ENCODE measurements at regions of chr19 and their contacts with region 1.

Region 1: GRCh38 chr19:49546825-49547565 is 19.2 kb downstream of the RCN3 start:
- DNase-seq: peak; percentile 89
- ATAC-seq: peak; percentile 90
- H3K4me3 ChIP-seq: no peak overlapping the region
- H3K27ac ChIP-seq: no peak overlapping the region
- H3K4me1 ChIP-seq: no peaks in the 10 kb centered on the region; the same call in 1 of the 2 replicates
- H3K27me3 ChIP-seq: no peaks in the 10 kb centered on the region
- CTCF ChIP-seq: peak; percentile 96
- POLR2A ChIP-seq: no peak
- RAD21 ChIP-seq: peak; percentile 83

Region 2: DNA sequence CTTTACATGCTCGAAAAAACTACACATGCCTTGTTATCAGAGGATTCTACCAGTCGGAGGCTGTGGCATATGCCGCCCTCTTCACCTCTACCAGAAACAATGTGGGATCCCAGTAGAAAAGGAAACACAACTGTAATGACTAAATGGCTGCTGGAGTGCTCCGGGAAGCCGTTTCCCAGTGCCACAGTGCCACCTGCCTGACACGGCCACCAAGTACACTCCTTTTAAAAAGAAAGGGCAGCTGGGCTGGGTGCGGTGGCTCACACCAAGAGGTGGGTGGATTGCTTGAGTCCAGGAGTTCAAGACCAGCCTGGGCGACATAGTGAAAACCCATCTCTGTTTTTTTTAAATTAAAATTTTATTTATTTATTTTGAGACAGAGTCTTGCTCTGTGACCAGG is 322.1 kb before region 1 on chr19:
- CTCF ChIA-PET with region 1: no interaction called
- POLR2A ChIA-PET with region 1: no interaction called
- dilution Hi-C with region 1: no loop called
- in situ Hi-C with region 1: no loop called
- intact Hi-C with region 1: loop called (anchors 5 kb)
- DNase-seq: peak; percentile 57
- ATAC-seq: peak; percentile 79
- H3K4me3 ChIP-seq: no peak overlapping the region
- H3K27ac ChIP-seq: no peak overlapping the region
- H3K4me1 ChIP-seq: no peaks in the 10 kb centered on the region
- H3K27me3 ChIP-seq: peaks cover 3% of the 10 kb centered on the region; the same call in 1 of the 2 replicates
- CTCF ChIP-seq: peak; percentile 60
- POLR2A ChIP-seq: no peak
- RAD21 ChIP-seq: peak; percentile 67

Region 3: GRCh38 chr19:49473868-49474544 is 73.0 kb before region 1 on chr19 and contains the start of gene FLT3LG:
- CTCF ChIA-PET with region 1: interaction called, 5 read pairs
- POLR2A ChIA-PET with region 1: no interaction called
- dilution Hi-C with region 1: no loop called
- in situ Hi-C with region 1: no loop called
- intact Hi-C with region 1: loop called (anchors 1 kb)
- DNase-seq: peak; percentile 69
- ATAC-seq: peak; percentile 85
- H3K4me3 ChIP-seq: peak within 1 kb of the TSS; percentile 59
- H3K27ac ChIP-seq: peak within 1 kb of the TSS; percentile 49
- H3K4me1 ChIP-seq: peaks cover 11% of the 10 kb centered on the region; the same call in 1 of the 2 replicates
- H3K27me3 ChIP-seq: no peaks in the 10 kb centered on the region
- CTCF ChIP-seq: peak; percentile 97
- POLR2A ChIP-seq: no peak
- RAD21 ChIP-seq: peak; percentile 69
- total RNA-seq, gene FLT3LG: 0.56 and 0.90 TPM in 2 replicates

Region 4: GRCh38 chr19:49502866-49503581 is 44.0 kb before region 1 on chr19:
- CTCF ChIA-PET with region 1: interaction called, 19 read pairs
- POLR2A ChIA-PET with region 1: interaction called, 3 read pairs
- dilution Hi-C with region 1: no loop called
- in situ Hi-C with region 1: no loop called
- intact Hi-C with region 1: loop called (anchors 1 kb)
- DNase-seq: peak; percentile 81
- ATAC-seq: peak; percentile 69
- H3K4me3 ChIP-seq: no peak overlapping the region
- H3K27ac ChIP-seq: peak overlapping the region; percentile 33; the same call in 1 of the 2 replicates
- H3K4me1 ChIP-seq: peaks cover 3% of the 10 kb centered on the region; the same call in 1 of the 2 replicates
- H3K27me3 ChIP-seq: no peaks in the 10 kb centered on the region
- CTCF ChIP-seq: peak; percentile 57
- POLR2A ChIP-seq: no peak
- RAD21 ChIP-seq: peak; percentile 65

Region 5: GRCh38 chr19:49570138-49570856 is 23.3 kb after region 1 on chr19:
- CTCF ChIA-PET with region 1: interaction called, 12 read pairs
- POLR2A ChIA-PET with region 1: no interaction called
- dilution Hi-C with region 1: no loop called
- in situ Hi-C with region 1: no loop called
- intact Hi-C with region 1: no loop called
- DNase-seq: peak; percentile 84
- ATAC-seq: peak; percentile 88
- H3K4me3 ChIP-seq: no peak overlapping the region
- H3K27ac ChIP-seq: no peak overlapping the region
- H3K4me1 ChIP-seq: no peaks in the 10 kb centered on the region
- H3K27me3 ChIP-seq: no peaks in the 10 kb centered on the region
- CTCF ChIP-seq: peak; percentile 100
- POLR2A ChIP-seq: 0 out of 2 replicates have a peak, but pooled peaks have one; percentile 39
- RAD21 ChIP-seq: peak; percentile 94

Region 6: DNA sequence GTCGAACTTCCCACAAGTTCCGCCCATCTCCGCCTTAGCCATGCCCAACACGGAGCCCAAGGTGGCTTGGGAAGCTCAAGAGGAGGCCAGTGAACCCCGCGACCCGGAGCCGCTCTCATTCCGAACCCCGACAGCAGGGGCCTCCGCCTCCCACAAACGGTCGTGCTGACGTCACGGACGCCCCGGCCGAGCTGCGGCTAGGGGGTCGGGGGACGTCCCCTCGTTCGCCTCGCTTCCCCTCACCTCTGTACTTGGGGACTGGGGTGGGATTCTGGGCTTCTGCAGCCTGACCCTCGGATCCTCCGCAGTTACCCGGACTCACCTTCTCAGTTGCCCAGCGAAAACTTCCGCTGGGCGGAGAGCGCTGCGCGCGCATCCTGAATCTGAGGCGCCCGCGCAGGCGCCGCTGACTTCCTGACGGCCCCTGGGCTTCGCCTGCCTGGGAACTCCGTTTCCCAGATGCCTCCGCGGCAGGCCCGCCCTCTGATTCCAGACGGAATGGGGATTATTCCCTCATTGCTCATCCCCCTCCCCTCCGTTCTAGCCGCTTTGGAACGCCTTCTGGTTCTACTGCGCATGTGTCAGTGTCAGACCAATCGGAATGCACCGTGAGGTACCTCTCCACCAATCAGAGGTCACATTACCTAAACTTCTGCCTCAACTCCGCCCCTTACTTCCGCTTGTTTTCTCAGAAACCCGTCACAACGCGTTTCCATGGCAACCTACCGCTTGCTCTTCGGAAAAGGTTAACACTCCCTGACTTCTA is 478.2 kb after region 1 on chr19 and contains the start of gene VRK3:
- CTCF ChIA-PET with region 1: no interaction called
- POLR2A ChIA-PET with region 1: interaction called, 14 read pairs
- dilution Hi-C with region 1: no loop called
- in situ Hi-C with region 1: no loop called
- intact Hi-C with region 1: no loop called
- DNase-seq: peak; percentile 100
- ATAC-seq: peak; percentile 94
- H3K4me3 ChIP-seq: peak within 1 kb of the TSS; percentile 87
- H3K27ac ChIP-seq: peak within 1 kb of the TSS; percentile 83
- H3K4me1 ChIP-seq: no peaks in the 10 kb centered on the region
- H3K27me3 ChIP-seq: no peaks in the 10 kb centered on the region
- CTCF ChIP-seq: peak; percentile 11; the same call in 1 of the 2 replicates
- POLR2A ChIP-seq: peak; percentile 83
- RAD21 ChIP-seq: no peak
- total RNA-seq, gene VRK3: 20.6 and 28.7 TPM in 2 replicates

Measured in IMR-90 (cell line).